Activated B cell treated with CpG ODN at 0.5 μM for 24 hours (primary cell): ENCODE measurements at regions of chr5 and their contacts with region 1.

Region 1: DNA sequence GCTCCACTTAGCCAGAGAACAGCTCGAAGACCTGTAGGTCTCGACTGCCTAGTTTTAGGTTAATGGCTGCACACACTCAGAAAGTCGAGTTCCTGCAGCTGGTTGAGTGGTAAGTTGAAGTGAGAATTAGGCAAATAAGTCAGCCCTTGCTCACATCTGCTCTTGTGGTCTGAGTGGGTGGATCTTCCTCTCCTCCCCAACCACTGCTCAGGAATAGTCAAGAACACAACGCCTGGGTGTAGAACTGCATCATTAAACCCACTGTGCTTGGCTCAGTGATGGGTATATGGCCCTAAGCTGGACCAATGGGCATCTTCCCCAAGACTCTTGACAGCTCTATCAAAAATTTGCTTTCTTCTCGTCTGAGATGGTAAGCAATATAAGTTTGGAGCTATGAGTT is 20.9 kb upstream of the ADAM19 start:
- DNase-seq: no peak
- ATAC-seq: peak; percentile 72
- H3K4me3 Mint-ChIP-seq: peak overlapping the region; percentile 42
- H3K27ac Mint-ChIP-seq: peak overlapping the region; percentile 93
- H3K4me1 Mint-ChIP-seq: peaks cover 97% of the 10 kb centered on the region
- H3K27me3 Mint-ChIP-seq: no peaks in the 10 kb centered on the region
- CTCF ChIP-seq: no peak

Region 2: GRCh38 chr5:157502143-157502647 is 94.3 kb before region 1 on chr5:
- CTCF ChIA-PET with region 1: no interaction called
- POLR2A ChIA-PET with region 1: interaction called, 21 read pairs
- intact Hi-C with region 1: loop called (anchors 1 kb)
- DNase-seq: no peak
- ATAC-seq: peak; percentile 73
- H3K4me3 Mint-ChIP-seq: peak overlapping the region; percentile 65
- H3K27ac Mint-ChIP-seq: peak overlapping the region; percentile 93
- H3K4me1 Mint-ChIP-seq: peaks cover 88% of the 10 kb centered on the region
- H3K27me3 Mint-ChIP-seq: no peaks in the 10 kb centered on the region
- CTCF ChIP-seq: no peak

Region 3: GRCh38 chr5:157558041-157558595 is 38.4 kb before region 1 on chr5:
- CTCF ChIA-PET with region 1: interaction called, 4 read pairs
- POLR2A ChIA-PET with region 1: interaction called, 10 read pairs
- intact Hi-C with region 1: no loop called
- DNase-seq: no peak
- ATAC-seq: no peak
- H3K4me3 Mint-ChIP-seq: no peak overlapping the region
- H3K27ac Mint-ChIP-seq: peak overlapping the region; percentile 83
- H3K4me1 Mint-ChIP-seq: peaks cover 90% of the 10 kb centered on the region
- H3K27me3 Mint-ChIP-seq: no peaks in the 10 kb centered on the region
- CTCF ChIP-seq: no peak

Region 4: GRCh38 chr5:157651623-157652549 is 55.4 kb after region 1 on chr5 and contains the start of gene SOX30:
- CTCF ChIA-PET with region 1: interaction called, 6 read pairs
- POLR2A ChIA-PET with region 1: interaction called, 8 read pairs
- intact Hi-C with region 1: loop called (anchors 2 kb)
- DNase-seq: peak; percentile 77
- ATAC-seq: peak; percentile 97
- H3K4me3 Mint-ChIP-seq: peak within 1 kb of the TSS; percentile 84
- H3K27ac Mint-ChIP-seq: peak within 1 kb of the TSS; percentile 86
- H3K4me1 Mint-ChIP-seq: peaks cover 50% of the 10 kb centered on the region
- H3K27me3 Mint-ChIP-seq: no peaks in the 10 kb centered on the region
- CTCF ChIP-seq: no peak
- total RNA-seq, gene SOX30: 0.37 and 0.47 TPM in 2 replicates

Region 5: GRCh38 chr5:157731272-157732129 is 135.0 kb after region 1 on chr5 and contains the start of gene THG1L:
- CTCF ChIA-PET with region 1: no interaction called
- POLR2A ChIA-PET with region 1: interaction called, 11 read pairs
- intact Hi-C with region 1: loop called (anchors 1 kb)
- DNase-seq: peak; percentile 93
- ATAC-seq: peak; percentile 84
- H3K4me3 Mint-ChIP-seq: peak within 1 kb of the TSS; percentile 98
- H3K27ac Mint-ChIP-seq: peak within 1 kb of the TSS; percentile 99
- H3K4me1 Mint-ChIP-seq: peaks cover 46% of the 10 kb centered on the region
- H3K27me3 Mint-ChIP-seq: no peaks in the 10 kb centered on the region
- CTCF ChIP-seq: no peak
- total RNA-seq, gene THG1L: 25.6 and 28.9 TPM in 2 replicates